MCF 10A (cell line): ENCODE measurements at regions of chr9 and their contacts with region 1.

Region 1: DNA sequence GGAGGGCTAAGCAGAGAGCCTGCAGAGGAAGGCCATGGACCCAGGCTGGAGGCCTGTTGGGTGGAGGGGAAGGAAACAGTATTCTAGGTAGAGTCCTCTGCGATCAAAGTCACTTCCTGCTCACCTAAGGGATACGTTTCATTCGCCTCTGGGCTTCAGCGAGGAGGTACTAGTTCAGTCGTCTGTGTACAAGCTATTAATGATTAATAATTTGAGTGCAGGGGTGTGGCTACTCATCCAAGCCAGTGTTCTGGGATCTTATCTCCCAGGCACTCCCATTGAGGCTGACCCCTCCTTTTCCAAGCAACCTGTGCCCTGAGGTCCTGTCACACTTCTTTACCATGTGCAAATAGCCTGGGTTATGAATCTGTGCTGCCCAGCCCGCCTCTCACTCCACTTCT is 25.2 kb downstream of the RALGPS1 start:
- DNase-seq: no peak
- H3K4me3 Mint-ChIP-seq: no peak overlapping the region
- H3K27ac Mint-ChIP-seq: no peak overlapping the region
- H3K4me1 Mint-ChIP-seq: no peaks in the 10 kb centered on the region
- H3K27me3 Mint-ChIP-seq: peaks cover 25% of the 10 kb centered on the region
- CTCF ChIP-seq: no peak

Region 2: DNA sequence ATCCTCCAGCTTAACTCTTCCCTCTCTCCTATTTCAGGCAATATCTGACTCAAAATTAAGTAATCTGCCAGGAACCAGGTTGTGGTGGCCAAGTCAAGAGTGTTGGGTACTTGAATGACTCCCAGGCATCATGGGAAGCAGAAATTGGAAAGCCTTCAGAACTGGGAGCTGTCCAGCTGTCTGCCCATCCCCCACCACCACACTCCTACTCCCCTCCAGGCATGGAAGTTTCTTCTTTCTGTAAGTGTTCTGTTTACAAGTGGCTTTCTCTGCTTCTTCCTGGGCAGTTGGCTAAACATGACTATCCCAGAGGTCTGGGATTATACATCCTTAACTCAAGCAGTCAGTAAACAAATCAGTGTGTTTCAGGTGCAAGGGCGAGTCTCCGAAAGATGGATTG is 1207.3 kb before region 1 on chr9:
- CTCF ChIA-PET with region 1: no interaction called
- POLR2A ChIA-PET with region 1: no interaction called
- intact Hi-C with region 1: no loop called
- DNase-seq: peak; percentile 21
- H3K4me3 Mint-ChIP-seq: no peak overlapping the region
- H3K27ac Mint-ChIP-seq: no peak overlapping the region
- H3K4me1 Mint-ChIP-seq: no peaks in the 10 kb centered on the region
- H3K27me3 Mint-ChIP-seq: peaks cover 28% of the 10 kb centered on the region
- CTCF ChIP-seq: no peak

Region 3: DNA sequence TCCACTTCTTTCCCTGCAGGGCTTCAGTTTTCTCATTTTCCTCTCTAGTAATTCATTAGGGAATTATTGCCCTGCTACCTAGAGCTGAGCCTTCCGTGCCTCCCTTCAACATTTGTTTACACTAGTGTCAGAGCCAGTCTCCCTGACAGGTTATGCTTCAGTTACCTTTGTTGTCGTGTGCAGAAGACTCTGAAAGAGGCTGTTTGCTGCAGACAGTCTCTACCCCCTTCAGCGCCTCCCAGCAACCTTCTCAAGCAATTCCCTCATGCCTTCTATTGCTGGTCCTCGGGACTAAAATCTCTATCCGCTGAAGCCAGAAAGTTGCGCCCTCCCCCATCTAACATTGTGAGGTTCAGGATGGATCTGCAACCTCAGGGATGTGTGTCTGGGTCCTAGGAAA is 12.4 kb before region 1 on chr9:
- CTCF ChIA-PET with region 1: interaction called, 10 read pairs
- POLR2A ChIA-PET with region 1: interaction called, 4 read pairs
- intact Hi-C with region 1: no loop called
- DNase-seq: no peak
- H3K4me3 Mint-ChIP-seq: no peak overlapping the region
- H3K27ac Mint-ChIP-seq: no peak overlapping the region
- H3K4me1 Mint-ChIP-seq: no peaks in the 10 kb centered on the region
- H3K27me3 Mint-ChIP-seq: no peaks in the 10 kb centered on the region
- CTCF ChIP-seq: no peak

Region 4: DNA sequence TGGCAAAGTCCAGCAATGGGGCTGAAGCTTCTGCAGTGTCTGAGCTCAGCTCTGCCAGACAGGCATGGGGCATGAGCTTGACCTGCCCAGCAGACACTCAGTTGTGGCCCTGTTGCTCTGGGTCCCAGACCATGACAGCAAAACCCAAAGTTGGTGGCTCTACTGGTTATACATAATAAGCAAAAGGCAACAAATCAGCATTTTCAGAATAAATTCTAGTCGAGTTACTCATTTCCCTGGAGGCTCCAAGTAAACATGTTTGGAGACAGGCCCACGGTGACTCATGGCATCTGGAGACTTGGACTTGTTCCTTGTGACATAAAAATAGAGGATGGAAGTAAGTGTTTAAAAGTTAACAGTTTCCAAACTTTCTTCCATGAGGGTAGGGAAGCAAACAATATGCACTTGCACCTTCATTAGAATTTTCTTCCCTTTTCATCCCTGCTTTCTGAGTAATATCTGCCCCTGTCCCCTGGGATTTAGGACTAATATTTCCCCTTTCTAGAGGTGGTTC is 397.0 kb after region 1 on chr9:
- CTCF ChIA-PET with region 1: no interaction called
- POLR2A ChIA-PET with region 1: no interaction called
- intact Hi-C with region 1: no loop called
- DNase-seq: peak; percentile 93
- H3K4me3 Mint-ChIP-seq: no peak overlapping the region
- H3K27ac Mint-ChIP-seq: peak overlapping the region; percentile 13
- H3K4me1 Mint-ChIP-seq: peaks cover 51% of the 10 kb centered on the region
- H3K27me3 Mint-ChIP-seq: no peaks in the 10 kb centered on the region
- CTCF ChIP-seq: no peak